AG04450 (cell line): ENCODE measurements at regions of chr4 and their contacts with region 1.

Region 1: GRCh38 chr4:7802093-7802726 is 137.5 kb downstream of the AFAP1 start:
- DNase-seq: no peak
- H3K4me3 ChIP-seq: no peak overlapping the region
- H3K27ac ChIP-seq: no peak overlapping the region
- H3K27me3 ChIP-seq: no peaks in the 10 kb centered on the region
- CTCF ChIP-seq: peak; percentile 89

Region 2: GRCh38 chr4:7699031-7699430 is 103.2 kb before region 1 on chr4:
- CTCF ChIA-PET with region 1: no interaction called
- POLR2A ChIA-PET with region 1: no interaction called
- DNase-seq: peak; percentile 51
- H3K4me3 ChIP-seq: no peak overlapping the region
- H3K27ac ChIP-seq: peak overlapping the region; percentile 52
- H3K27me3 ChIP-seq: peaks cover 20% of the 10 kb centered on the region
- CTCF ChIP-seq: no peak

Region 3: GRCh38 chr4:7821245-7822136 is 19.3 kb after region 1 on chr4:
- CTCF ChIA-PET with region 1: interaction called, 12 read pairs
- POLR2A ChIA-PET with region 1: interaction called, 7 read pairs
- DNase-seq: no peak
- H3K4me3 ChIP-seq: no peak overlapping the region
- H3K27ac ChIP-seq: no peak overlapping the region
- H3K27me3 ChIP-seq: no peaks in the 10 kb centered on the region
- CTCF ChIP-seq: no peak

Region 4: DNA sequence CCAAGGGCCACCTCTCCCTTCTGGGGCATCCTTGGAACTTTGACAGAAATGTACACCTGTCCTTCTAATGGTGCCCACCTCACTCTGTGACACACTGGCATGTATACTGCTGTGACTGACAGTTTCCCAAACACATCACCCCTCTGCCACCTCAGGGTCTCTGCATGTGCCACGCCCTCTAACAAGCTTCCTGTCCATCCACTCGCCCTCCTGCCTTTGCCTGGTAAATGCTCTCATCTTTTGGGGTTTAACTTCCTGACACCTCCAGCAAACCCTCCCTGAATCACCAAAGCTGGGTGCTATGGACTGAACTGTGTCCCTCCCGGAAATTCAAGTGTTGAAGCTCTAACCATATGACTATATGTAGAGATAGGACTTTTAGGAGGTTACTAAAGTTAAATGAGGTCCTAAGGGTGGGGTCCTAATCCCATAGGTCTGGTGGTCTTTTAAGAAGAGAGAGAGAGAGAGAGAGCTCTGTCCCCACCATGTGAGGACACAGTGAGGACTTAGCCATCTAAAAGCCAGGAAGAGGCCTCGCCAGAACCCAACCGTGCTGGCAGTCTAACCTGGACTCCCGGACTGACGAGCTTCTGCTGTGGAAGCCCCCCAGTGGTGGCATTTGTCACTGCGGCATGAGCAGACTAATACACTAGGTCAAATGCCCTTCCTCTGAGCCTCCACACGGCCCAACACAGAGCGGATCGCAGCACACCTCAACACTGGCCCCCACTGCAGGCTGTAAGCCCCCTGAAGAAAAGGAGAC is 41.8 kb after region 1 on chr4:
- CTCF ChIA-PET with region 1: interaction called, 14 read pairs
- POLR2A ChIA-PET with region 1: interaction called, 4 read pairs
- DNase-seq: peak; percentile 65
- H3K4me3 ChIP-seq: no peak overlapping the region
- H3K27ac ChIP-seq: peak overlapping the region; percentile 100
- H3K27me3 ChIP-seq: no peaks in the 10 kb centered on the region
- CTCF ChIP-seq: peak; percentile 72

Region 5: DNA sequence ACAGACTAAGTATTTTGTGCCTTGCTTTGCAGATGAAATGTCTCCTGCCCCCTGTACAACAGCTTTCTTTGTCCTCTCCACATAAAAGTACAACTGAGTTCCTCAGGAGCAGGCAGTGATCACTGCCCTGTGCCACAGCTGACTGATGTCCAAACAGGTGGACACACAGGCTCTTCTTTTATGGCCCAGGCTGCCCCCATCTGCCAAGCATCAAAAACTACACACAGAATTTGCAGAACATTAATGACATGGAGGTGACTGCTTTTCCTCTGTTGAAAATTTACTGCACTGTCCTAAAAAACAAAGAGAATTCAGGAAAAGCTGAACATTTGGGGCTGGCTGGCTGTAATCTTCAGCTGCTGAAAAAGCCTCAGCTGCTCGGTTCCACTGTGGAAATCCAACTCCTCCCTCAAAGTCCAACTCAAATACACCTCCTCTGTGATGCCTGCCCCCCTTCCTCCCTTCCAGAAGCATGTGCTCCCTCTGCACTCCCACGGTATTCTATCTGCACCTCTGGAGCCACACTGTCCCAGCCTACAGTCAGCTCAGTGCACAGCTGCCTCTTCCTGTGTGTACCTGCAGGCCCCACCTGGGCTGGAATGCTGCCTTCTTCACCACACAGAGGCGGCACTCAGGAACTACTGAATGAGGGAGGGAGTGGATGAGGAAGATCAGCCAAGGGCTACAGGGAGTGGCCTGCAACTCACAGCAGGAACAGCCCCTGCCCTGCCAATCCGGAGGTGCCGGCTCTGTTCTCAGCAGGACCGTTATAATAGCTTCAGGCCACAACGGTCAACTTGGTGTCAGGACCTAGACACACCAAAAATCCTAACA is 127.1 kb after region 1 on chr4:
- CTCF ChIA-PET with region 1: interaction called, 24 read pairs
- POLR2A ChIA-PET with region 1: no interaction called
- DNase-seq: no peak
- H3K4me3 ChIP-seq: no peak overlapping the region
- H3K27ac ChIP-seq: peak overlapping the region; percentile 39
- H3K27me3 ChIP-seq: no peaks in the 10 kb centered on the region
- CTCF ChIP-seq: peak; percentile 36; the same call in 1 of the 2 replicates

Region 6: GRCh38 chr4:7987148-7987989 is 185.2 kb after region 1 on chr4:
- CTCF ChIA-PET with region 1: interaction called, 164 read pairs
- POLR2A ChIA-PET with region 1: interaction called, 4 read pairs
- DNase-seq: no peak
- H3K4me3 ChIP-seq: no peak overlapping the region
- H3K27ac ChIP-seq: no peak overlapping the region
- H3K27me3 ChIP-seq: peaks cover 2% of the 10 kb centered on the region
- CTCF ChIP-seq: peak; percentile 91